ENCODE measurements at regions of chr9 and their contacts with region 1.

Region 1: DNA sequence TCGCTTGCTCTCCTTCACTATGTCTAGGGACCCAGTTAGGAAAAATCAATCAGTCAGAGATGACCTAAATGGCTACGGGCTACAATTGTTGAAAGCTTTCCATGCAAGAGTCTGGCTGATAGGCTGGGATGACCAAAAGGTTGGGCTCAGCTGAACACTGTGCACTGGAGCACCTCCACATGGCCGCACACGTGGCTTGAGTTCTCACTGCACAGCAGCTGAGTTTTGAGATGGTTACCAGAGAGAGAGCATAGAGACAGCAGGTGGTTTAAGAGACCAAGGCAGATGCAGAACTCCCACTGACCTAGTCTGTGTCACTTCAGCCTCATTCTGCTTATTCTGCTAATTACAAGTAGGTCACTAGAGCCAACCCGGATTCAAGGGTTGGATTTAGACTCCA is 2354.8 kb upstream of the C9orf72 start:
- DNase-seq: no peak

Region 2: DNA sequence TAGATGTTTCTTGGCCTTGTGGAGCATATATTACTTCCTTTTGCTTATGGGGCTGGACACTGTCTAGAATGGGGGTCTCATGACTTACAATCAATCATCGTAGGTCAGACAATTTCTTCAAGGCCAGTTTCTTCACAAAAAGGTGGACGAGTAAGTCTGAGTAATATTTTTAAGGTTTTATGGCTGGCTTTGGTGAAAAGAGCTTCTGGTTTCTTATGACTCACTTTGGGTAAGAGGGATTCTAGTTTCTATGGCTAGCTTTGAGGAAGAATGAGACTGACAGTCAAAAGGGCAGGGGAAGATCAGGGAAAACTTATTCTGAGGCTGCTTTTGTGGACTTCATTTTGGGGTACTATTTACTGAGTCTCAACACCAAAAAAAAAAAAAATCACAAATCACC is 287.6 kb before region 1 on chr9:
- intact Hi-C with region 1: loop called in 1 of 2 experiments (anchors 5 kb)
- DNase-seq: no peak

Region 3: GRCh38 chr9:29945012-29945411 is 16.9 kb after region 1 on chr9:
- intact Hi-C with region 1: loop called in 1 of 2 experiments (anchors 1 kb)
- DNase-seq: no peak